Activated naive CD4-positive, alpha-beta T cell treated with anti-CD3 and anti-CD28 coated beads for 36 hours (primary cell): ENCODE measurements at regions of chr11 and their contacts with region 1.

Region 1: DNA sequence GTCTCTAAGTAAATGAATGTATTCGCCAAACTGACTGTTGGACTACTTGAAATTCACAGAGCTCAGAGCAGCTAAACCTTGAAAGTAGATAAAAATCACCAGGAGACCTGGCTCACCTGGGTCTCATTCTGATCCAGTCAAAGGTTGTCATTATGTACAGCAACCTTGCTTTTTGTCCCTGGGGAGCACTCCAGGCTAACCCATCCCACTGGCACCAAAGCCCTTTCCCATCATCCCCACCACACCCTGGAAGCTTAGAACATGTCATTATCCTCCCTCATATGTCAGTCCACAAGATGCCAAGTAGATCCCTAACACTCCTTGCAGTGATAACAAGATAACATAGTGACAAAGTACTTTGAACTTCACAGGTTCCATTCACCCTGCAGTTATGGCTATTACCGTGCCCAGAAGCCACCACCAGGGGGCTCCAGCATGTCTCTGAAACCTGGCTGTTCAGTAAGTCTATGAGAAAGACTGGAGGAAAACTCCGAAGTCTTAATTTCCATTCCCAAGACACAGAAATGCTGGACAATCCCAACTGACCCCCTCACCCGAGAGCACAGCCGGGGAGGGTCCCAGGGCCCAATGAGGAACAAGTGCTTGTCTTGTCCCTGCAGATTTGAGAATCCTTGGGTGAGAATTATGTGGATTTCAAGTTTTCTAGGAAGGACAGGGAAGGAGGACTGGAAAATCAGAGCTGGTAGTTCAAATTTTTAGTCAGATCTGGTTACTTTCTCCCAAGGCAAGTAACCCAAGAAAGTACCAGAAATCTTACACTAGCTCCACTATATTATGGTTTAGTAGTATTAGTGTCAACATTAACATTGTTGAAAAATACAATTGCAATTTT is 43.0 kb upstream of the USP47 start:
- DNase-seq: peak; percentile 90
- H3K4me3 Mint-ChIP-seq: no peak overlapping the region
- H3K27ac Mint-ChIP-seq: no peak overlapping the region
- H3K4me1 Mint-ChIP-seq: no peaks in the 10 kb centered on the region
- H3K27me3 Mint-ChIP-seq: peaks cover 8% of the 10 kb centered on the region

Region 2: GRCh38 chr11:11848891-11849746 is 50.3 kb after region 1 on chr11:
- CTCF ChIA-PET with region 1: interaction called, 22 read pairs
- intact Hi-C with region 1: loop called (anchors 1 kb)
- DNase-seq: peak; percentile 80
- H3K4me3 Mint-ChIP-seq: no peak overlapping the region
- H3K27ac Mint-ChIP-seq: peak overlapping the region; percentile 46
- H3K4me1 Mint-ChIP-seq: peaks cover 51% of the 10 kb centered on the region
- H3K27me3 Mint-ChIP-seq: no peaks in the 10 kb centered on the region

Region 3: DNA sequence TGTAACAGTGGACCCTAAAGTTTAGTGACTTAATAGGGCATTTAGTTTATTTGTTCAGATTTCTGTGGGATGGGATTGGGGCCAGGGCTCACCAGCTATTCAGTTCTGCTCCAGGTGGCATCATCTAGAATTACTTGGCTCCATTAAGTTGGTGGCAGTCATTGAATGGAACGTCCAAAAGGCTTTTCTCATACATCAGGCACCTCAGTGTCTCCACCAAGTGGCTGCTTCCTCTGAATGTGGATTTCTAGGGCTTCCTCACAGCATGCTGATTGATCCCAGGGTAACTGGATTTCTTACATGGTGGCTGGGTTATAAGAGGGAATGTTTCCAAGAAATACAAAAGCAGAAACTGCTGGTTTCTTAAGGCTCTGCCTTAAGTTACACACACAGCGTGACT is 77.6 kb after region 1 on chr11:
- CTCF ChIA-PET with region 1: interaction called, 12 read pairs
- intact Hi-C with region 1: no loop called
- DNase-seq: peak; percentile 17
- H3K4me3 Mint-ChIP-seq: no peak overlapping the region
- H3K27ac Mint-ChIP-seq: no peak overlapping the region
- H3K4me1 Mint-ChIP-seq: peaks cover 46% of the 10 kb centered on the region
- H3K27me3 Mint-ChIP-seq: no peaks in the 10 kb centered on the region

Region 4: GRCh38 chr11:11895672-11896071 is 96.9 kb after region 1 on chr11:
- CTCF ChIA-PET with region 1: interaction called, 4 read pairs
- intact Hi-C with region 1: loop called (anchors 1 kb)
- DNase-seq: no peak
- H3K4me3 Mint-ChIP-seq: no peak overlapping the region
- H3K27ac Mint-ChIP-seq: no peak overlapping the region
- H3K4me1 Mint-ChIP-seq: no peaks in the 10 kb centered on the region
- H3K27me3 Mint-ChIP-seq: no peaks in the 10 kb centered on the region

Region 5: DNA sequence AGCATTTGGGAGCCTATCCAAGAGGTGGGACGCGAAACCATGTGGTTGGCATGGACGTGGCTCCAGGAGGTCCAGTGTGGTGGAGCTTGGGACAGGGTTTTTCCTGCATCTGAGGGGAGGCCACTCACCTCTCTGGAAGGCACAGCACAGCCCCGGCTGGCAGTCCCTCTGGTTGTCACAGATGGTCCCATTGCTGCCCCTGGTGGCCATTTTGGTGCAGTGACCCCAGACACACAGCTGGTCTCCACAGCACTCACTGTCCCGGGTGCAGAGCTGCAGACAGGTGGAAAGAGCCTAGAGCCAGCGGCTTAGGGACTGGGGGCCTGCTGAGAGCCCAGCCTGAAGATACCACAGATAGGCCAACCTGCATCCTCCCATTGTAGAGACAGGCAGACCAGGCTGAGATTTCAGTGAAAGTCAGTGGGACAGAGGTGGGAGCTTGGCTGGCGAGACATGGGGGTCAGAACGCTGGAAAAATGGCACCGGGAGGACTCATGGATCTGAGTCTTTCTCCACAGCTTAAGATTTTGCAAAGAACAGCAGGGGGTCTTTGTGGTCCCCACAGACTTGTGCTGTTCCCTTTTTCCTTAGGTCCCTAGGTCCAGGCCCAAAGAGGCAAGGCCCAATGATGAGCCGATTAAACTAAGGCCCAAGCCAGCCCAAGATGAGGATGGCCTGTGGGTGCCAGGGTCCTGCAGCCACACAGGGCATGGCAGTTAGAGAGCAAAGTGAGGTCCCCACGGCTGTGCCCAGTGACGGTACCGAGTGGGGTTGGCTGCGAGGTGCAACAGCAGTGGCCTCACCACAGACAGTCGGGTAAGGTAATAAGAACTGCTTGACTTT is 168.2 kb after region 1 on chr11:
- CTCF ChIA-PET with region 1: interaction called, 3 read pairs
- intact Hi-C with region 1: loop called (anchors 1 kb)
- DNase-seq: peak; percentile 83
- H3K4me3 Mint-ChIP-seq: no peak overlapping the region
- H3K27ac Mint-ChIP-seq: no peak overlapping the region
- H3K4me1 Mint-ChIP-seq: peaks cover 6% of the 10 kb centered on the region
- H3K27me3 Mint-ChIP-seq: no peaks in the 10 kb centered on the region

Region 6: GRCh38 chr11:12043959-12044819 is 245.4 kb after region 1 on chr11:
- CTCF ChIA-PET with region 1: interaction called, 15 read pairs
- intact Hi-C with region 1: loop called (anchors 1 kb)
- DNase-seq: peak; percentile 79
- H3K4me3 Mint-ChIP-seq: no peak overlapping the region
- H3K27ac Mint-ChIP-seq: no peak overlapping the region
- H3K4me1 Mint-ChIP-seq: peaks cover 3% of the 10 kb centered on the region
- H3K27me3 Mint-ChIP-seq: peaks cover 8% of the 10 kb centered on the region

Region 7: GRCh38 chr11:12281571-12282478 is 483.0 kb after region 1 on chr11:
- CTCF ChIA-PET with region 1: interaction called, 5 read pairs
- intact Hi-C with region 1: loop called (anchors 2 kb)
- DNase-seq: peak; percentile 87
- H3K4me3 Mint-ChIP-seq: no peak overlapping the region
- H3K27ac Mint-ChIP-seq: no peak overlapping the region
- H3K4me1 Mint-ChIP-seq: peaks cover 2% of the 10 kb centered on the region
- H3K27me3 Mint-ChIP-seq: no peaks in the 10 kb centered on the region